ENCODE measurements at regions of chr12 and their contacts with region 1.

Region 1: DNA sequence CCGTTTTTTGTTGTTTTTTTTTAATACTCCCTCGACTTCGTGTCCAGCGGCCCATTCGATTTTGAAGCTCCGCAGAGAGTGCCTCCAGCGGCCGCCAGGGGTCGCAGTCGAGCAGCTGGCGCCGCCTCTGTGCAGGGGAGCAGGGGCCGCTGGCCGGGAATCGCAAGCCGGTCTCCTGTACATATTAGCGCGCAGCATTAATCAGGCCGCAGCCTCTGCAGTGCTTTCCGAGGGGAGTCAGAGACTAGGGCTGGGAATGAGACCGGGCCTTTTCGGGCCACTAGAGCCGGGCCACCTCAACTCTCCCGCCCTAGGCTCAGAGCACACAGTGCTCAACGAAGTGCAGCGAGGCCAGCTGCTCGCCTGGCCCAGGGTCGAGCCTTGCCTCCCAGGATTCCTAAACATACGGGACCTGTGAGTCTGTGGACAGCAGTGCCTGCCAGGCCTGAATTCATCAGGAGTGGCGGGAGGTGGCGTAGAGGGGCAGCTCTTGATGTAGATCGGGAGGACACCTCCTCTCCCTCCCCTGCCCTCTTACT is 81.8 kb downstream of the EMP1 start:
- DNase-seq: peak; percentile 18 to 72 (median 56)
- ATAC-seq: peak; percentile 83
- H3K4me3 ChIP-seq: no peak overlapping the region
- H3K4me3 Mint-ChIP-seq: peak overlapping the region in 4 of 10 donors; percentile 6 to 29 (median 22)
- H3K27ac ChIP-seq: no peak overlapping the region
- H3K27ac Mint-ChIP-seq: no peak overlapping the region
- H3K4me1 ChIP-seq: no peaks in the 10 kb centered on the region
- H3K4me1 Mint-ChIP-seq: peaks cover 0 to 7% (median 5%) of the 10 kb centered on the region in 7 donors
- H3K27me3 ChIP-seq: no peaks in the 10 kb centered on the region
- H3K27me3 Mint-ChIP-seq: peaks cover 37 to 45% (median 41%) of the 10 kb centered on the region in 5 donors

Region 2: GRCh38 chr12:13661005-13661887 is 382.9 kb after region 1 on chr12:
- CTCF ChIA-PET with region 1: interaction called, 3 read pairs
- POLR2A ChIA-PET with region 1: no interaction called
- intact Hi-C with region 1: loop called (anchors 1 to 5 kb)
- DNase-seq: peak in 3 of 9 donors; percentile 1 to 20 (median 5)
- ATAC-seq: no peak
- H3K4me3 ChIP-seq: no peak overlapping the region
- H3K4me3 Mint-ChIP-seq: no peak overlapping the region
- H3K27ac ChIP-seq: no peak overlapping the region
- H3K27ac Mint-ChIP-seq: no peak overlapping the region
- H3K4me1 ChIP-seq: no peaks in the 10 kb centered on the region
- H3K4me1 Mint-ChIP-seq: no peaks in the 10 kb centered on the region
- H3K27me3 ChIP-seq: no peaks in the 10 kb centered on the region
- H3K27me3 Mint-ChIP-seq: peaks cover 0 to 22% (median 9%) of the 10 kb centered on the region in 5 donors